ENCODE measurements at regions of chr21 and their contacts with region 1.

Region 1: GRCh38 chr21:45596704-45597318 is 46.7 kb upstream of the PCBP3 start:
- DNase-seq: peak; percentile 87
- ATAC-seq: peak; percentile 81

Region 2: DNA sequence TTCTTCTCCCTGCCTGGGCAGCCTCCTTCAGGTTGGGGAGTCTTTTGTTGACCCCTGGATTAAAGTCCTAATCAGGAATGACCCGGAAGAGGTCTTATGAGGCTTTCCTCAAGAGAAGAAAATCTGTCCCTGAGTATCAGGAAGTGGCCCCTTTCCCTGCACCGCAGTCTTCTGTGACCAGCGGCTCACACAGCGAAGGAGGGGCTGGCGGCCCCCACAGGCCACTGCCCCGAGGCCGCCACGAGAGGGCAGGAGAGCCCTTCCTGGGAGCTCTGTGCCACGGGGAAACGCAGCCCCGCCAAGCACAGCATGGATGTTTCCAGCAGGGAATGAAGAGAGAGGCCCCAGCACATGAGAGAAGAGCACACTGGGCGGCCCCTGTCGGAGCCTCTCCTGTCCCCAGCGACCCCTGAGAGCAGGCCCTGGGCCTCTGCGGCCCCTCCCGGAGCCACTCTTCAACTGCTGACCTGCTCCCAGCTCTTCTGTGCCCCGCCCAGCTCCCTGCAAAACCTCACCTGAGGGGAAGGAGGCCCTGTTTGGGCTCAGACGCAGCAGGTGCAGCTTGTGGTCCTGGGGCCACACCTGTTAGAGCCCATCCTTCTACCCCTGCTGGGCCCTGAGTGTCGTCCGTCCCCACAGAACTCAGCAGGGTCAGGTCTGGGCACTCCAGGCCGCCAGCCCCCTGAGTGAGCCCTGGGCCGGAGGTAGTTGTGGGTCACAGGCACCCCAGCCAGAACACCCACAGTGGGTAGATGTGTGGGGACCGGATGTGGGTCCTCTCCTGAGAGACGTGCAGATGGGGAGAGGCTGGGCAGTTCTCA is 304.2 kb before region 1 on chr21:
- intact Hi-C with region 1: loop called (anchors 5 kb)
- DNase-seq: peak; percentile 92
- ATAC-seq: peak; percentile 76

Region 3: GRCh38 chr21:45478115-45478801 is 118.6 kb before region 1 on chr21:
- intact Hi-C with region 1: loop called (anchors 5 kb)
- DNase-seq: peak; percentile 89
- ATAC-seq: peak; percentile 63